ENCODE measurements at regions of chr1 and their contacts with region 1.

Region 1: DNA sequence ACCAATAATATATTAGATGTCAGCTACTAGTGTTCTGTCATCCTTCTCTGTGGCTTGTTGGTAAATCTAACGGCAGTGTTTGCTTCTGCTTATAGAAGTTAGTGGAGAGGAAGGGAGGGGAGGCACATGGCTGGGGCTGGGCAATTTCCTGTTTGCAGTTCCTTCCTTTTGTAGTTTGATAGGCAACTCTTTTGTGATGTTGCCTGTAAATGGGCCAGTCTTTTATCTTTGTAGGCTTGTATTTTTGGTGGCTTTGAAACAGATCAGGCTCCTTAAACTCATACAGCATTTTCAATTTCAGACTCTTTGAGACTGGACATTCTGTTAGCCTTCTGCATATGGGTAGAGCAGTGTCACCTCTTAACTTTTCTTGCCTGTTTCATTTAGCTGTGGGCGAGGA is 48.1 kb downstream of the CDC14A start:
- DNase-seq: peak; percentile 78 to 90 (median 86)
- H3K4me3 ChIP-seq: peak overlapping the region in 1 of 2 donors; percentile 25
- H3K4me3 Mint-ChIP-seq: peak overlapping the region; percentile 74 to 85 (median 82)
- H3K27ac ChIP-seq: peak overlapping the region; percentile 55
- H3K27ac Mint-ChIP-seq: peak overlapping the region; percentile 89 to 95 (median 92)
- H3K4me1 ChIP-seq: peaks cover 100% of the 10 kb centered on the region
- H3K4me1 Mint-ChIP-seq: peaks cover 66 to 92% (median 80%) of the 10 kb centered on the region in 4 donors
- H3K27me3 ChIP-seq: no peaks in the 10 kb centered on the region
- H3K27me3 Mint-ChIP-seq: no peaks in the 10 kb centered on the region

Region 2: DNA sequence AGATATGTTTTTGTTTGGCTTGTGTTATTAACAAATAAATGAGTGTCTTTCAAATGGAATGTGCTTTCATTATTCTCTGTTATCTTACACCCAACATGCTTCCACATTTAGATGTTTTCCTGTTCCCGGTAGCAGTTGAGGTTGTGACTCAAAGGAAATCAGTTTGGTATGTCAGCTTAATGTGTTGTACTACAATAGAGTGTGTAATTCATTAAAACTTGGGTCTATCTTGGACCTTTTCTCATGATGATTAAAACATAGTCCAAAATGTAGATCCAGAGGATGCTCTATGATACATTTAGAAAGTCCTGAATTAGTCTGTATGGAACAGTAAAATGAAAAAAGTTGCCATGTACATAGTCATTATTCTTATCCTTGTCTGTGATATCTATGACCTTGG is 107.7 kb before region 1 on chr1:
- CTCF ChIA-PET with region 1: no interaction called
- POLR2A ChIA-PET with region 1: no interaction called
- intact Hi-C with region 1: no loop called
- DNase-seq: no peak
- H3K4me3 ChIP-seq: no peak overlapping the region
- H3K4me3 Mint-ChIP-seq: no peak overlapping the region
- H3K27ac ChIP-seq: no peak overlapping the region
- H3K27ac Mint-ChIP-seq: peak overlapping the region in 3 of 7 donors; percentile 57 to 75 (median 65)
- H3K4me1 ChIP-seq: no peaks in the 10 kb centered on the region
- H3K4me1 Mint-ChIP-seq: peaks cover 0 to 1% (median 0%) of the 10 kb centered on the region in 4 donors
- H3K27me3 ChIP-seq: no peaks in the 10 kb centered on the region
- H3K27me3 Mint-ChIP-seq: no peaks in the 10 kb centered on the region

Region 3: DNA sequence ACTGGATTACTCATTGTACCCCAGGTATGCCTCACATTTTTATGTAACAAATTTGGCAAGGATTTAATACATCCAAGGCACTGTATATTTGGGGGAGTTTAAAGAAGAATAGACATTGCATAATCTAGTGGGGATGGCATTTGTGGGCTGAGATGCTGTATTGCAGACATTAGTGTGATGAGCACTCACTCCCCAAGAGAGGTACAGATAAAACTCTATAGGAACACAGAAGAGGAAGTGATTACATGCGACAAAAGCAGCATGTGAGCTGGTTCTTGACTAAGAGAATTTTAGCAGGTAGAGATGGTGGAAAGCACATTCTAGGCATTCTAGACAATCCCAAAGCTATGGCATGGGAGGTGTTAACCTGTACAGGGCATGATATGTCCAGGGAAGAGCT is 72.3 kb before region 1 on chr1:
- CTCF ChIA-PET with region 1: no interaction called
- POLR2A ChIA-PET with region 1: no interaction called
- intact Hi-C with region 1: no loop called
- DNase-seq: no peak
- H3K4me3 ChIP-seq: no peak overlapping the region
- H3K4me3 Mint-ChIP-seq: no peak overlapping the region
- H3K27ac ChIP-seq: no peak overlapping the region
- H3K27ac Mint-ChIP-seq: no peak overlapping the region
- H3K4me1 ChIP-seq: no peaks in the 10 kb centered on the region
- H3K4me1 Mint-ChIP-seq: no peaks in the 10 kb centered on the region
- H3K27me3 ChIP-seq: no peaks in the 10 kb centered on the region
- H3K27me3 Mint-ChIP-seq: no peaks in the 10 kb centered on the region

Region 4: DNA sequence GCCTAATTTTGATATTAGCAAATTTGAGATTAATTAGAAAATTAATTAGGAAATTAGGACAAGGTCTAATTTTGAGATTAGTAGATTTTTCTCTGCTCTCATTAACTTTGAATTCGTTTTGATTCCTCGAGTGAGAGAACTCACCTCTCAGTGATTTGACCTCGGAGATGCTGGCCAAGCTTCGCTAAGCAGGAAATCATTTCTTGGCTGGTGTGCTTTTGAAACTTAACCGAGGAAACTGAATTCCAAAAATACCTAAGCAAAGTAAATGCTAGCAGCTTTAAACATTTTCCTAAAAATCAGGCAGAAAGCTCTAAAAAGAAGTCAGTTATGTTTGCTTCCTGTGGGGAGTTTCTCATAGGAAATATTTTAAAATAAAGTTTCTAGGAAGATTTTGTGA is 13.2 kb before region 1 on chr1:
- CTCF ChIA-PET with region 1: interaction called, 10 read pairs
- POLR2A ChIA-PET with region 1: interaction called, 23 read pairs
- intact Hi-C with region 1: loop called (anchors 1 kb)
- DNase-seq: no peak
- H3K4me3 ChIP-seq: no peak overlapping the region
- H3K4me3 Mint-ChIP-seq: peak overlapping the region; percentile 67 to 80 (median 73)
- H3K27ac ChIP-seq: peak overlapping the region; percentile 65
- H3K27ac Mint-ChIP-seq: peak overlapping the region; percentile 89 to 95 (median 93)
- H3K4me1 ChIP-seq: peaks cover 98% of the 10 kb centered on the region
- H3K4me1 Mint-ChIP-seq: peaks cover 69 to 98% (median 87%) of the 10 kb centered on the region in 4 donors
- H3K27me3 ChIP-seq: no peaks in the 10 kb centered on the region
- H3K27me3 Mint-ChIP-seq: no peaks in the 10 kb centered on the region

Region 5: GRCh38 chr1:100430325-100430813 is 30.0 kb after region 1 on chr1:
- CTCF ChIA-PET with region 1: interaction called, 18 read pairs
- POLR2A ChIA-PET with region 1: interaction called, 65 read pairs
- intact Hi-C with region 1: no loop called
- DNase-seq: no peak
- H3K4me3 ChIP-seq: no peak overlapping the region
- H3K4me3 Mint-ChIP-seq: peak overlapping the region in 3 of 8 donors; percentile 3 to 26 (median 13)
- H3K27ac ChIP-seq: no peak overlapping the region
- H3K27ac Mint-ChIP-seq: peak overlapping the region in 6 of 7 donors; percentile 35 to 76 (median 59)
- H3K4me1 ChIP-seq: peaks cover 78% of the 10 kb centered on the region
- H3K4me1 Mint-ChIP-seq: peaks cover 50 to 76% (median 64%) of the 10 kb centered on the region in 4 donors
- H3K27me3 ChIP-seq: no peaks in the 10 kb centered on the region
- H3K27me3 Mint-ChIP-seq: no peaks in the 10 kb centered on the region

Region 6: GRCh38 chr1:100443811-100444571 is 43.6 kb after region 1 on chr1:
- CTCF ChIA-PET with region 1: interaction called, 9 read pairs
- POLR2A ChIA-PET with region 1: interaction called, 32 read pairs
- intact Hi-C with region 1: loop called (anchors 1 kb)
- DNase-seq: peak; percentile 52 to 69 (median 61)
- H3K4me3 ChIP-seq: peak overlapping the region; percentile 8 to 26
- H3K4me3 Mint-ChIP-seq: peak overlapping the region; percentile 74 to 91 (median 80)
- H3K27ac ChIP-seq: peak overlapping the region; percentile 96
- H3K27ac Mint-ChIP-seq: peak overlapping the region; percentile 98 to 100 (median 99)
- H3K4me1 ChIP-seq: peaks cover 99% of the 10 kb centered on the region
- H3K4me1 Mint-ChIP-seq: peaks cover 65 to 93% (median 75%) of the 10 kb centered on the region in 4 donors
- H3K27me3 ChIP-seq: no peaks in the 10 kb centered on the region
- H3K27me3 Mint-ChIP-seq: no peaks in the 10 kb centered on the region

Region 7: DNA sequence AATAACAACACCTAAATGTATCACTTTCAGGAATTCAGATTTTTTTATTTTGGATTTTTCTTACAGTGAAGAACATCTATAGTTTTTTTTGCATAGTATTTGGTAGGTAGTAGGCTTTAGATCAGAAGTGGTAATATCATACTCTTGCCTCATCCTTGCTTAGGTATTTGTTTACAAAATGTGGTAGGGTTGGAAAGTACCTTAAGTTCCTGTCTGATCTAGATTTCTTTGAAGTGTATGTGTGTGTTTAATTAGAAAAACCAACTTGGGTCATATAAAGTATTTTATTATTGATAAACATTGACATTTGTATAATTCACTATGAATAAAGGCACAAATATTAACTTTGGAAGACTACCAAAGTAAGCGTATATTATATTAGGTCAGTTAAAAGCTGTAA is 52.2 kb after region 1 on chr1:
- CTCF ChIA-PET with region 1: interaction called, 30 read pairs
- POLR2A ChIA-PET with region 1: interaction called, 27 read pairs
- intact Hi-C with region 1: loop called (anchors 1 kb)
- DNase-seq: peak in 4 of 5 donors; percentile 73 to 86 (median 80)
- H3K4me3 ChIP-seq: no peak overlapping the region
- H3K4me3 Mint-ChIP-seq: peak overlapping the region in 7 of 8 donors; percentile 32 to 83 (median 58)
- H3K27ac ChIP-seq: peak overlapping the region; percentile 78
- H3K27ac Mint-ChIP-seq: peak overlapping the region; percentile 89 to 100 (median 98)
- H3K4me1 ChIP-seq: peaks cover 100% of the 10 kb centered on the region
- H3K4me1 Mint-ChIP-seq: peaks cover 58 to 93% (median 76%) of the 10 kb centered on the region in 4 donors
- H3K27me3 ChIP-seq: no peaks in the 10 kb centered on the region
- H3K27me3 Mint-ChIP-seq: no peaks in the 10 kb centered on the region